Ascending aorta (tissue), 2 donors: ENCODE measurements at regions of chr6 and their contacts with region 1.

Region 1: GRCh38 chr6:139240161-139241010 is 51.4 kb downstream of the TXLNB start:
- DNase-seq: no peak
- H3K4me3 ChIP-seq: peak overlapping the region; percentile 2 to 12
- H3K27ac ChIP-seq: peak overlapping the region; percentile 78 to 80
- H3K4me1 ChIP-seq: peaks cover 3 to 37% of the 10 kb centered on the region in 2 donors
- H3K27me3 ChIP-seq: no peaks in the 10 kb centered on the region
- CTCF ChIP-seq: no peak

Region 2: DNA sequence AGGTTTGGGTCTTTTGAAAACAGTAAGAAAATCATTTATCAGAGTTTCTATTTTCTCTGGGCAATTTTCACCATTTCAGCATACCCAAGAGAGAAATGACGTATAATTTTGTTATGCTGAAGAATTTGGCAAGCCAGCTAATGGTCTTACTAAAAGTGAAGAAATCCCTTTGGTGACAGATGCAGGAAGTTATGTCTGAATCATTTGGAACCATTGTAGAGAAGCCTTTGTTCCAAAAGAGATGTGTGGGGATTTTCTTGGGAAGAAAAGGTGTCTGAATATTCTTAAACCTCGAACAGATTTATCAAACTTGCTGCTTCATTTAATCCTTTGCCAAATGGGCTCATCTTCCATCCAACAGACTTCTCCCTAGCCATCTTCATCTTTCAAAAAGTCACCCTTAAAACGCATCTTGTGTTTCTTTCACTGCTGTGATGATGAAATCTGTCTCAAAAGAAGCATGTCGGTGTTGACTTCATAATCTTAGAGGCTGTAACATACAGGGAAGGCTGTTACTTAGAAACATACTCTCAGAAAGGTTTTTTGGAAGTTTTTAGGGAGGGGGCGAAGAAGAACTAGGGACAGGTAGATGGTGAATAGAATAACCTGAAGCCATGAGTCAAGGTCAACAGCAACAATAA is 94.5 kb after region 1 on chr6:
- intact Hi-C with region 1: loop called (anchors 5 kb)
- DNase-seq: no peak
- H3K4me3 ChIP-seq: no peak overlapping the region
- H3K27ac ChIP-seq: peak overlapping the region; percentile 69 to 71
- H3K4me1 ChIP-seq: peaks cover 4 to 15% of the 10 kb centered on the region in 2 donors
- H3K27me3 ChIP-seq: no peaks in the 10 kb centered on the region
- CTCF ChIP-seq: no peak

Region 3: DNA sequence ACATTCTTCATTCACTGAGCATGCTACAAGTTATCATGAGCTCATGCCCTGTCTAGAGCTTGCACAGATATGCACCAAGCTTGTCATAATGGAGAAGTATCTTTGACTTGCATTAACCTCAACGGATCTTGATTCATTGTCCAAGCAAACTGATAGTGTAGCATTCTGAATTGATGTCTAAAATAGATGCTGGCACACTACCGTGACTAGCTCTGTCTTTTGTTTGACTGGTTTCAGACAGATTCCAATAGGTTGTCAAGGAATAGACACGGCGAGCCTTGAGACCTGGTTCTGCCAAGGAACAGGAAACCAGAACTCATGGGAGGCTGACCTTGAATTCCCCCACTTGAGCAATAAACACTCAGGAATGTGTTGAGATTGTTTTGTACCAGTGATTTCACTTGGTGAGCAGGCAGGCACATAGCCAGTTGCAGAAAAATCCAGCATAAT is 1739.3 kb after region 1 on chr6:
- intact Hi-C with region 1: loop called (anchors 10 kb)
- DNase-seq: peak; percentile 9 to 87
- H3K4me3 ChIP-seq: peak overlapping the region; percentile 13 to 29
- H3K27ac ChIP-seq: peak overlapping the region; percentile 76 to 79
- H3K4me1 ChIP-seq: peaks cover 4 to 24% of the 10 kb centered on the region in 2 donors
- H3K27me3 ChIP-seq: no peaks in the 10 kb centered on the region
- CTCF ChIP-seq: no peak